ENCODE measurements at regions of chr2 and their contacts with region 1.

Region 1: DNA sequence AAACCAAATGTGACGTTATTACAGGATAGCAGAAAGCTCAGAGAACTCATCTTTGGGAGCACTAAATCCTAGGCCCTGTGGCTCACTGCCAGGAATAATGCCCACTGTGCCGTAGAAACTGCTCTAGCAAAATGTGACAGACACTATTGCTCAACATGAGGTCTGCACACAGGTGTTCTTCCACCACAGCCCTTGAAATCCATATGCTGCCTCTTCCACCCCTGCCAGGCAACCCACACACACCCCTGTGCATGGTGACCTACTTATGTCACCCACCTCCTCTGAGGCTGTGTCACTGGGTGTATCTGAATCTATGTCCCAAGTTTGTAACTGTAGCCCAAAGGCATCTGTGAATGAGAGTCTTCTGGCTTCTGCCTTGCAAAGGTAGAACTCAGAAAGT is 66.1 kb upstream of the MBOAT2 start:
- DNase-seq: no peak
- H3K4me3 ChIP-seq: no peak overlapping the region
- H3K4me3 Mint-ChIP-seq: no peak overlapping the region
- H3K27ac Mint-ChIP-seq: no peak overlapping the region
- H3K4me1 ChIP-seq: peaks cover 5% of the 10 kb centered on the region; the same call in 1 of the 2 replicates
- H3K4me1 Mint-ChIP-seq: peaks cover 13% of the 10 kb centered on the region
- H3K27me3 ChIP-seq: no peaks in the 10 kb centered on the region
- H3K27me3 Mint-ChIP-seq: peaks cover 3% of the 10 kb centered on the region
- CTCF ChIP-seq: no peak

Region 2: DNA sequence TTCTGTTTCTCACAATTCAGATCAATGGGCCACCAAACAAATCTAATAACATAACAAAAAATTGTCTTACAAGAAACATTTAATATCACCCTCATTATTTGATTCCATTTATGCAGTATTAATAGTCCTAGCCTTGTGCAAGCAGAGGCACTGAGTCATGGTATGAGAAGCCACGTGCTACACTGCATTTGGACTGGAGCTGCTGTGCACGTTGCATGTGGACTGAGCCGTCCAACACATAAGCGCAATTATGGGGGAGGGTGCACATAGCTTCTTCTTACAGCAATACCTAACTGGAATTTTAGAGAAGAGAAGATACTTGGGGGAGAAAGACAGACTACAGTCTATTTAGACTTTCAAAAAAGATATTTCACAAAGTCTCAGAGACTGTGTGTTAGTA is 717.2 kb before region 1 on chr2:
- CTCF ChIA-PET with region 1: no interaction called
- POLR2A ChIA-PET with region 1: no interaction called
- intact Hi-C with region 1: no loop called
- DNase-seq: no peak
- H3K4me3 ChIP-seq: no peak overlapping the region
- H3K4me3 Mint-ChIP-seq: no peak overlapping the region
- H3K27ac Mint-ChIP-seq: no peak overlapping the region
- H3K4me1 ChIP-seq: no peaks in the 10 kb centered on the region
- H3K4me1 Mint-ChIP-seq: no peaks in the 10 kb centered on the region
- H3K27me3 ChIP-seq: no peaks in the 10 kb centered on the region
- H3K27me3 Mint-ChIP-seq: no peaks in the 10 kb centered on the region
- CTCF ChIP-seq: no peak

Region 3: DNA sequence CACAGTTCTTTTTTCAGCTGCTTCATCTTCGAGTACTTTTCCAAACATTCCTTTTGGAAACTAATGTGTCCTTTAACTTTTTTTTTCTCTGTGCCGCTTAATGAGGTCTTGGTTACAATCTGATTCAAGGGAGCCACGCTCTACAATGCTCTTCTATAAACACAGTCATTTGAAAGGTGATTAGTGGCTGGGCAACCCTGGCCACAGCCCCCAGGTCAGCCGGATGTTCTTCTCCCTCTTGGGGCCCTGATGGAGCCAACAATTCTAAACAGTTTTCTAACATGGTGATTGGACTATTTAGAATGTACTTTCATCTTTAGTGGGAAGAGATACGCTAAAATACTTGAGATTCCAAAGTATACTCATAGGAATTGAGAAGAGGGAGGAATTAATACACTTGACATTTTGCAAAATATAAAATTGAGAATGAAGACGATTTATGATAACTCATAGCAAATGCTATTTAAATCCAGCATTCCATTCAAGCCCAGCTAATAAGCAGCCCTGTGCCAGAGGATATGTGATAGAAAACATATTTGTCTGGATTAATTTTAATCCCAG is 17.7 kb after region 1 on chr2:
- CTCF ChIA-PET with region 1: no interaction called
- POLR2A ChIA-PET with region 1: no interaction called
- intact Hi-C with region 1: loop called (anchors 2 kb)
- DNase-seq: no peak
- H3K4me3 ChIP-seq: no peak overlapping the region
- H3K4me3 Mint-ChIP-seq: no peak overlapping the region
- H3K27ac Mint-ChIP-seq: no peak overlapping the region
- H3K4me1 ChIP-seq: peaks cover 15% of the 10 kb centered on the region
- H3K4me1 Mint-ChIP-seq: peaks cover 12% of the 10 kb centered on the region
- H3K27me3 ChIP-seq: no peaks in the 10 kb centered on the region
- H3K27me3 Mint-ChIP-seq: no peaks in the 10 kb centered on the region
- CTCF ChIP-seq: no peak

Region 4: DNA sequence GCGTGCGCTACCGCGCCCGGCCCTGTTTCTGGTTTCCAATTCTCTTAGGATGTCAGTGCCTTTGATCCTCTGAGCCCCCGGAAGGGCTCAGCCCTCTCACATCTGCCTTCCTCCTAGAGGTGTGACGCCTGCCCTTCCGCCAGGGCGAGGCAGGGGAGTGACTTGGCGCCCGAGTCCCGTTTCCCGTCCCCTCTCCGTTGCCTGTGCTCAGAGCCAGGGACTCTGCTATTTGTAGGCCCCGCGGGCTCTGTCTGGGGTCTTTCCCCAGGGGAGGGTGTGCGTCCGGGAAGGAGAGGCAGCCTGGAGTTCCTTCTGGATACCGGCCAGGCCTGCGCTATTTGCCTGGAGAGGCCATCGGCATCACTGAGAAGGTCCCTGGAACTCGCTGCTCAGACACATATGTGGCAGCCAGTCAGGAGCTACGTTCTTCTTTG is 670.0 kb after region 1 on chr2:
- CTCF ChIA-PET with region 1: no interaction called
- POLR2A ChIA-PET with region 1: no interaction called
- intact Hi-C with region 1: no loop called
- DNase-seq: no peak
- H3K4me3 ChIP-seq: no peak overlapping the region
- H3K4me3 Mint-ChIP-seq: no peak overlapping the region
- H3K27ac Mint-ChIP-seq: no peak overlapping the region
- H3K4me1 ChIP-seq: no peaks in the 10 kb centered on the region
- H3K4me1 Mint-ChIP-seq: no peaks in the 10 kb centered on the region
- H3K27me3 ChIP-seq: no peaks in the 10 kb centered on the region
- H3K27me3 Mint-ChIP-seq: no peaks in the 10 kb centered on the region
- CTCF ChIP-seq: no peak

Measured in Caco-2 (cell line).